ENCODE measurements at regions of chr17 and their contacts with region 1.

Region 1: GRCh38 chr17:37489197-37490001 is at the start of gene DUSP14:
- DNase-seq: peak; percentile 82 to 88 (median 84)
- ATAC-seq: peak; percentile 87
- H3K4me3 ChIP-seq: peak within 1 kb of the TSS; percentile 52 to 79
- H3K27ac ChIP-seq: peak within 1 kb of the TSS; percentile 93 to 98 (median 96)
- H3K4me1 ChIP-seq: peaks cover 22% of the 10 kb centered on the region
- H3K27me3 ChIP-seq: no peaks in the 10 kb centered on the region
- CTCF ChIP-seq: no peak
- POLR2A ChIP-seq: peak; percentile 58 to 82 (median 81)
- total RNA-seq, gene DUSP14: 9.6 to 9.9 TPM

Region 2: DNA sequence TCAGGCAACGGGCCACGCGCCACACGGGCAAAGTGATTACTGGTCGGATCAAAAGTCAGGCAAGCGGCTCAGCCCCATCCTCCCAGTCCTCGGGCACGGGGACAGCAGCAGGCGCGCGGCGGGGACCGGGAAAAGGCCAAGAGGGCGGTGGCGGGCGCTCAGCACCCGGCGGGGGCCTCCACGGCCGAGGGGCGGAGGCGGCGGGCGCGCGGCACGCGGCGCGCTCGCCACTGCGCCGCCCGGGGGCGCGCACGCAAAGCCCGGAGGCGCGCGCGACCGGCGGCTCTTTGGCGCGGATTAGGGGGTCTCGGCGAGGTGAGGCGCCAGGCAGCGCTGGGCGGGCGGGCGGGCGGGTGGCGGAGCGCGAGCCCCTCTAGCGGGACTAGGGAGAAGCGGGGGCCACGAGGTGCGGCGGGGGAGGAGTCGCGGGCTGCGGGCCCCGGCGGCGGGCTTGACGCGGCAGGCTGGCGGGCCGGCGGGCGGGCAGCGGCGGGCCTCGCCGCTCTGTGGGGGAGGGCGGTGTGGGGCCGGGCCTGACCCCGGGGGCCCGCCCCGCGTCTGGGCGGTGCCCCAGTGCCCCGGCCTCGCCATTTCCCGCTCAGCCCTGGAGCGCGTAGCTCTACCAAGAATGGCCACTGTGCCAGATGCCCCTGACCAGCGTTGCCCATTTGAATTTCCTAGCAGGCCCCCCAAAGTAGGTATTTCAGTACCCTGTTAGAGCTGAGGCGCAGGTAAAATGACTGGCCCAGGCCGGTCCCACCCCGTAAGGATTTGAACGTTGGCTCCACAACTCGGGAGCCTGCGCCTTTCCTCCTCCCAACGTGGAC is 82.6 kb before region 1 on chr17 and contains the starts of genes ACACA and TADA2A:
- intact Hi-C with region 1: loop called (anchors 10 kb)
- DNase-seq: peak; percentile 81 to 86 (median 82)
- ATAC-seq: peak; percentile 96
- H3K4me3 ChIP-seq: peak within 1 kb of the TSS; percentile 30 to 85
- H3K27ac ChIP-seq: peak within 1 kb of the TSS; percentile 76 to 98 (median 86)
- H3K4me1 ChIP-seq: peaks cover 23% of the 10 kb centered on the region
- H3K27me3 ChIP-seq: no peaks in the 10 kb centered on the region
- CTCF ChIP-seq: peak in 3 of 7 experiments; percentile 34 to 47 (median 44)
- POLR2A ChIP-seq: peak; percentile 55 to 78 (median 71)
- total RNA-seq, gene ACACA: 9.1 to 49.1 TPM
- total RNA-seq, gene TADA2A: 9.9 to 13.5 TPM

Region 3: DNA sequence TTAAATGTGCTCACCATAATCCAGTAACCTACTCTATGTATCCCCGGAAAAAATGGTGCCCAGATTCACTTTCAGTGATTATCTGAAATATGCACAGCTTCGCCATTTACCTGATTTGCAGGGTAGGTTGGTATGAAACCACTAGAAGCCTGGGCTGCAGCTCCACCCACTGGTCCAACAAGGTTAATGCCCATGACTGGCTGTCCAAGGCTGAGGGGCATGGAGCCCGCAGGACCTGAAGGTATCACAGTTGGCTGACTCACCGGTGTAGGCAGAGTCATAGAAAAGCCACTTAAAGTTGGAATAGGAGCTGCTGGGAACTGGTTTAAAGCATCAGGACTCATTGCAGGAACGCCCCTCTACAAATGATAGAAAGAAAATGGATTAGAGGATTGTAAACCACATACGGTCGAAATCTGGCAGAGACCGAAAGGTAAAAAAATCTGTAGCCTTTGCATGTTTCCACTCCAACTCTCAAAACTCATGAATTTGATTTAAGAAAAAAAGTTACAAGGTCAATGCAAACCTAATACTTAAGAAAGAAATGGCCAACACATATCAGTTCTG is 81.2 kb after region 1 on chr17:
- intact Hi-C with region 1: no loop called
- DNase-seq: peak; percentile 48 to 63 (median 51)
- ATAC-seq: peak; percentile 40
- H3K4me3 ChIP-seq: no peak overlapping the region
- H3K27ac ChIP-seq: no peak overlapping the region
- H3K4me1 ChIP-seq: no peaks in the 10 kb centered on the region
- H3K27me3 ChIP-seq: no peaks in the 10 kb centered on the region
- CTCF ChIP-seq: peak in 5 of 7 experiments; percentile 31 to 49 (median 42)
- POLR2A ChIP-seq: no peak